Activated CD8-positive, alpha-beta T cell treated with anti-CD3 and anti-CD28 coated beads for 36 hours (primary cell): ENCODE measurements at regions of chr13 and their contacts with region 1.

Region 1: GRCh38 chr13:45292176-45292575 is 48.8 kb downstream of the TPT1 start:
- DNase-seq: no peak
- ATAC-seq: no peak
- H3K4me3 Mint-ChIP-seq: no peak overlapping the region
- H3K27ac Mint-ChIP-seq: no peak overlapping the region
- H3K4me1 Mint-ChIP-seq: peaks cover 18% of the 10 kb centered on the region
- H3K27me3 Mint-ChIP-seq: no peaks in the 10 kb centered on the region
- CTCF ChIP-seq: no peak

Region 2: GRCh38 chr13:44921931-44922758 is 370.0 kb before region 1 on chr13:
- CTCF ChIA-PET with region 1: no interaction called
- POLR2A ChIA-PET with region 1: no interaction called
- intact Hi-C with region 1: no loop called
- DNase-seq: no peak
- ATAC-seq: no peak
- H3K4me3 Mint-ChIP-seq: no peak overlapping the region
- H3K27ac Mint-ChIP-seq: no peak overlapping the region
- H3K4me1 Mint-ChIP-seq: no peaks in the 10 kb centered on the region
- H3K27me3 Mint-ChIP-seq: peaks cover 7% of the 10 kb centered on the region
- CTCF ChIP-seq: no peak

Region 3: DNA sequence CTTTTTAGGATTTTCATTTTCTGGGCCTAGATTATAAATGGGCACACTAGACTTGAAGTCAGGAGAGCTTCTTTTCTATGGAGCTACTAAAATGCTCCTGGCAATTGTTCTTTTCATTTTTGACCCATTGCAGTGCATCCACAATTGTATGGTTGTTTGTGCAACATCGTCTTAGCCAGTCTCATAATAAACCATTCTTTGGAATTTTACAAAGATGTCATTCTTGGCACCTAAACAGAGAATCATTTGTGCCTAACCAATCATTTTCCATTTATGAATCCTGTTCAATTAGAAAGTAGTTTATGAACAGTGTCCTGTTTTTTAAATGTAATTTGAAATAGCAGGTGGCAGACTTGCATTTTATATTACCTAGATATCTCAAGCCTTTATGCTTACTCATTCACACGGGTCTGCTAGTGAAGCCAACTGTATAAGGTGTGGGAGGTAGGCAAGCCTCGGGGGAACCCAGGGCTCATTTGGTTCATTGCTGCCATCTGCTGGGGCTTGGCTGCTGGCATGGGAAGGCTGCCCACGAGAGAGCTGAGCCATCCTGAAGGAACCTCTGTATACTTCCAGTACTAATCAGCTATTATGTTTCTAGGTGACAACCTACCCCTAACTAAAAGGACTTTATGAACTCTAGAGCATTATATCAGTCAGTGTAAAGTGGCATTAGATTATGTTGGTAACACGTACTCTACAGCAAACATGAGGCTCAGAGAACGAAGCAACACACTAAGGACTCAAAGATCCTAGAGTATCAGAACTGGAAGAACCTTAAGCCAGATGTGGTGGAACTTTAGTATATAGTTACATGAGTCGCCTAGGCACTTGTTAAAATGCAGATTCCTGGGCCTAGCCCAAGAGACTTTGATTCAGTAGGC is 11.2 kb before region 1 on chr13:
- CTCF ChIA-PET with region 1: interaction called, 14 read pairs
- POLR2A ChIA-PET with region 1: no interaction called
- intact Hi-C with region 1: no loop called
- DNase-seq: peak; percentile 81
- ATAC-seq: peak; percentile 96
- H3K4me3 Mint-ChIP-seq: no peak overlapping the region
- H3K27ac Mint-ChIP-seq: no peak overlapping the region
- H3K4me1 Mint-ChIP-seq: peaks cover 9% of the 10 kb centered on the region
- H3K27me3 Mint-ChIP-seq: no peaks in the 10 kb centered on the region
- CTCF ChIP-seq: peak; percentile 71

Region 4: GRCh38 chr13:45320876-45321629 is 28.9 kb after region 1 on chr13:
- CTCF ChIA-PET with region 1: no interaction called
- POLR2A ChIA-PET with region 1: no interaction called
- intact Hi-C with region 1: no loop called
- DNase-seq: no peak
- ATAC-seq: no peak
- H3K4me3 Mint-ChIP-seq: no peak overlapping the region
- H3K27ac Mint-ChIP-seq: no peak overlapping the region
- H3K4me1 Mint-ChIP-seq: peaks cover 3% of the 10 kb centered on the region
- H3K27me3 Mint-ChIP-seq: no peaks in the 10 kb centered on the region
- CTCF ChIP-seq: no peak